ENCODE measurements at regions of chr12 and their contacts with region 1.

Region 1: DNA sequence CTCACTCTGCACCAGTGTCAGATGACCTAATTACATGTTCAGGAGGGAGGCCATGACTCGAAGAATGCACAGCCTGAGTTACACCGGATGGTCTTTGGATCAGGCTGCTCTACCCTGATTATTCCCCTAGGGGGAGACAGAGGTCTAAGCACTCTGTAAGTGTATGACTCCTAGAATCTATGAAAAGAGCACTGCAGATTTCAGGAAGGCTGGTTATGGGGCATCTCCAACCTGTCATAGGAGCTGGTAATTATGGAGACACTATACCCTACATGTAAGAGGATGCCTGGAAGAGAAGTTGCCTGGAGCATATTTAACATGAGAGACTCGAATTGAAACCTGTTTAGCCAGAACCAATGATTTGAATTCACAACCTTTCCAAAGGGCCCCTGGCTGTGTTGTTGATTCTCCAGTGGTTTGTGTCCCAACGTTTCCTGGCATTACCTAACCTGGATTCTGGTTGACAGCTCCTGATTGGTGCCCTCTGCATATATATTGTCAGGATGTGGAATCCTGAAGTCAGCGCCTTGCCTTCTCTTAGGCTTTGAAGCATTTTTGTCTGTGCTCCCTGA is at the start of gene MUCL1:
- DNase-seq: peak; percentile 21 to 79 (median 73)
- ATAC-seq: peak; percentile 99
- H3K4me3 ChIP-seq: no peak within 1 kb of the TSS
- H3K4me3 Mint-ChIP-seq: no peak within 1 kb of the TSS
- H3K27ac ChIP-seq: no peak within 1 kb of the TSS
- H3K27ac Mint-ChIP-seq: peak within 1 kb of the TSS in 2 of 9 donors; percentile 44 to 70
- H3K4me1 ChIP-seq: no peaks in the 10 kb centered on the region
- H3K4me1 Mint-ChIP-seq: peaks cover 0 to 12% (median 5%) of the 10 kb centered on the region in 7 donors
- H3K27me3 ChIP-seq: no peaks in the 10 kb centered on the region
- H3K27me3 Mint-ChIP-seq: peaks cover 0 to 4% (median 0%) of the 10 kb centered on the region in 5 donors
- total RNA-seq, gene MUCL1: not detected

Region 2: GRCh38 chr12:54723379-54724256 is 130.5 kb before region 1 on chr12:
- CTCF ChIA-PET with region 1: interaction called, 5 read pairs
- POLR2A ChIA-PET with region 1: no interaction called
- intact Hi-C with region 1: loop called in 1 of 2 experiments (anchors 1 kb)
- DNase-seq: peak in 7 of 9 donors; percentile 21 to 50 (median 35)
- ATAC-seq: peak; percentile 73
- H3K4me3 ChIP-seq: no peak overlapping the region
- H3K4me3 Mint-ChIP-seq: no peak overlapping the region
- H3K27ac ChIP-seq: no peak overlapping the region
- H3K27ac Mint-ChIP-seq: peak overlapping the region in 1 of 9 donors; percentile 18
- H3K4me1 ChIP-seq: no peaks in the 10 kb centered on the region
- H3K4me1 Mint-ChIP-seq: peaks cover 2 to 24% (median 10%) of the 10 kb centered on the region in 7 donors
- H3K27me3 ChIP-seq: no peaks in the 10 kb centered on the region
- H3K27me3 Mint-ChIP-seq: peaks cover 0 to 29% (median 8%) of the 10 kb centered on the region in 5 donors

Measured in naive thymus-derived CD4-positive, alpha-beta T cell (primary cell).